MCF 10A (cell line): ENCODE measurements at regions of chr6 and their contacts with region 1.

Region 1: GRCh38 chr6:79570129-79571029 is 33.1 kb upstream of the LCA5 start:
- DNase-seq: peak; percentile 54
- H3K4me3 Mint-ChIP-seq: no peak overlapping the region
- H3K27ac Mint-ChIP-seq: peak overlapping the region; percentile 63
- H3K4me1 Mint-ChIP-seq: peaks cover 18% of the 10 kb centered on the region
- H3K27me3 Mint-ChIP-seq: no peaks in the 10 kb centered on the region
- CTCF ChIP-seq: peak; percentile 68

Region 2: GRCh38 chr6:79544939-79545450 is 25.4 kb before region 1 on chr6:
- CTCF ChIA-PET with region 1: interaction called, 7 read pairs
- POLR2A ChIA-PET with region 1: interaction called, 13 read pairs
- intact Hi-C with region 1: no loop called
- DNase-seq: peak; percentile 99
- H3K4me3 Mint-ChIP-seq: peak overlapping the region; percentile 51
- H3K27ac Mint-ChIP-seq: peak overlapping the region; percentile 95
- H3K4me1 Mint-ChIP-seq: peaks cover 8% of the 10 kb centered on the region
- H3K27me3 Mint-ChIP-seq: no peaks in the 10 kb centered on the region
- CTCF ChIP-seq: peak; percentile 25

Region 3: DNA sequence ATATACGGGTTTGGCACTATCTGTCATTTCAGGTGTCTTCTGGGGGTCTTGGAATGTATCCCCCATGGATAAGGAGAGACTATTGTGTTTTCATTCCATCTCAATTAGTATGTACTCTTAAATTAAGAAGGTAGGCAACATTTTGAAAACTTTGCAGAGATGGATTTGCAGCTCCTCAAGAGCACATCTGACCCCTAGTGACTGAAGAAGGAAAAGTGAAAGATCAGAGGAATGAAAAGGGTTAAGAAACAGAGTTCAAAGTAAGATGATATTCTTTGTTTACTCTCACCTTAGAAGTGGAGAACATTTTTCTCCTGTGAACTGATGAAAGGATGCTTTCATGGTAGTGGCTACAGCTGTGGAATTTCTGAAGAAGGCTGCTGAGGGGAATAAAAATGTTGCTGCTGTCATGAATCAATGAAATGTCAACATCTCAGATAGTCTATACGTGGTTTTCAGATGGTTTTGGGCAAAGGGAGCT is 102.3 kb after region 1 on chr6:
- CTCF ChIA-PET with region 1: interaction called, 14 read pairs
- POLR2A ChIA-PET with region 1: no interaction called
- intact Hi-C with region 1: loop called (anchors 1 kb)
- DNase-seq: peak; percentile 45
- H3K4me3 Mint-ChIP-seq: no peak overlapping the region
- H3K27ac Mint-ChIP-seq: peak overlapping the region; percentile 90
- H3K4me1 Mint-ChIP-seq: peaks cover 17% of the 10 kb centered on the region
- H3K27me3 Mint-ChIP-seq: no peaks in the 10 kb centered on the region
- CTCF ChIP-seq: peak; percentile 65

Region 4: DNA sequence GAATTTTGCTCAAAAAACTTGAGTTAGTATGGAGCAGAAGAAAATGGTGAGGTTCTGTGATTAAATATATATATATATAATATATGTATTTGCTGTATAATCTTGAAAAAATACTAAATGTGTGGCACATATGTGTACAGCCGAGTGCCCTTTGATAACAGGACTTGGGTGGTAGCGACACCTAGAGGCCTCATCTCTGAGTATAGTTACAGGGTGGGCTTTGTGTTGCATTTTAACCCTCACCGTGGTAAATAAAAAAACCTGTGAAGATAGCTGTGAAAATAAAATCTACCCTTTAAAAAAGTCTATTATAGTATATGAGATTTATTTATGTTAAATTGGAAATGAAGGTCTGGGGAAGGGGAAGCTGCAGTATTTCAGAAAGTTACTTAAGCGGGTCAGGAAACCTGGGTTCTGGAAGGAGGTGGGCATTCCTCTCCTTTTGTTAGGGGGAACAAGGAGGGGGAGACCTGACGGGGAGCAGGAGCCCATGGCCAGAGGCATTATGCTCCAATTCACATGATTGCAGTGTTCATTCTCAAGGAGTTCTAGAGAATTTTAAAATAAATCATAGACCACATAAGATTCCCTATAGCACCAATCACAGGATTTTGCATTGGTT is 143.4 kb after region 1 on chr6:
- CTCF ChIA-PET with region 1: interaction called, 4 read pairs
- POLR2A ChIA-PET with region 1: no interaction called
- intact Hi-C with region 1: loop called (anchors 2 kb)
- DNase-seq: peak; percentile 64
- H3K4me3 Mint-ChIP-seq: no peak overlapping the region
- H3K27ac Mint-ChIP-seq: no peak overlapping the region
- H3K4me1 Mint-ChIP-seq: no peaks in the 10 kb centered on the region
- H3K27me3 Mint-ChIP-seq: no peaks in the 10 kb centered on the region
- CTCF ChIP-seq: peak; percentile 76

Region 5: GRCh38 chr6:79813854-79814709 is 243.7 kb after region 1 on chr6:
- CTCF ChIA-PET with region 1: interaction called, 11 read pairs
- POLR2A ChIA-PET with region 1: interaction called, 3 read pairs
- intact Hi-C with region 1: loop called (anchors 2 kb)
- DNase-seq: peak; percentile 79
- H3K4me3 Mint-ChIP-seq: no peak overlapping the region
- H3K27ac Mint-ChIP-seq: no peak overlapping the region
- H3K4me1 Mint-ChIP-seq: no peaks in the 10 kb centered on the region
- H3K27me3 Mint-ChIP-seq: no peaks in the 10 kb centered on the region
- CTCF ChIP-seq: peak; percentile 77